ENCODE measurements at regions of chr2 and their contacts with region 1.

Region 1: DNA sequence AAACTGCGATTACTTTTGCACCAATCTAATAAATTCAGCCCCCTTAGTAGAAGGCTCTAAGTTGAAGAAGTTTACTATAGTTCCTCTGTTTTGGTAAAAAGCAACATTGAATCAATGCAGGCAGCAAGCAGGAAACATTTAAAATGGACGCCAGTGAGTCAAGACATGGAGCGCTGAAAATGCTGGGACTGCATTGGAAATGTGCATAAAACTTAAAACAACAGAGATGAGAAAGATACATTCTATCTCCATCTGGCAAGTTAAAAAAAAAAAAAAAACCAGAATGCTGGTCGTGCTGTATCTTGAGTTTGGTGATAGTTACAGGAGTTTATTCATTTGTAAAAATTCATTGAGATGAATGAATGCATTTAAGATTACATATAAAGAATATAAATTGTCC is 117.0 kb upstream of the TWIST2 start:
- DNase-seq: no peak
- H3K4me3 Mint-ChIP-seq: no peak overlapping the region
- H3K27ac Mint-ChIP-seq: no peak overlapping the region
- H3K4me1 Mint-ChIP-seq: no peaks in the 10 kb centered on the region
- H3K27me3 Mint-ChIP-seq: peaks cover 72% of the 10 kb centered on the region
- CTCF ChIP-seq: no peak

Region 2: GRCh38 chr2:238658054-238658407 is 72.8 kb before region 1 on chr2:
- CTCF ChIA-PET with region 1: interaction called, 10 read pairs
- intact Hi-C with region 1: no loop called
- DNase-seq: no peak
- H3K4me3 Mint-ChIP-seq: no peak overlapping the region
- H3K27ac Mint-ChIP-seq: no peak overlapping the region
- H3K4me1 Mint-ChIP-seq: no peaks in the 10 kb centered on the region
- H3K27me3 Mint-ChIP-seq: peaks cover 38% of the 10 kb centered on the region
- CTCF ChIP-seq: no peak

Measured in Calu3 (cell line).